ENCODE measurements at regions of chr2 and their contacts with region 1.

Region 1: GRCh38 chr2:43484323-43484930 is 111.4 kb downstream of the THADA start:
- DNase-seq: no peak
- ATAC-seq: peak; percentile 65 to 80 (median 70)
- H3K4me3 ChIP-seq: no peak overlapping the region
- H3K27ac ChIP-seq: peak overlapping the region; percentile 47
- H3K4me1 ChIP-seq: peaks cover 32% of the 10 kb centered on the region
- H3K27me3 ChIP-seq: no peaks in the 10 kb centered on the region
- CTCF ChIP-seq: peak; percentile 73

Region 2: DNA sequence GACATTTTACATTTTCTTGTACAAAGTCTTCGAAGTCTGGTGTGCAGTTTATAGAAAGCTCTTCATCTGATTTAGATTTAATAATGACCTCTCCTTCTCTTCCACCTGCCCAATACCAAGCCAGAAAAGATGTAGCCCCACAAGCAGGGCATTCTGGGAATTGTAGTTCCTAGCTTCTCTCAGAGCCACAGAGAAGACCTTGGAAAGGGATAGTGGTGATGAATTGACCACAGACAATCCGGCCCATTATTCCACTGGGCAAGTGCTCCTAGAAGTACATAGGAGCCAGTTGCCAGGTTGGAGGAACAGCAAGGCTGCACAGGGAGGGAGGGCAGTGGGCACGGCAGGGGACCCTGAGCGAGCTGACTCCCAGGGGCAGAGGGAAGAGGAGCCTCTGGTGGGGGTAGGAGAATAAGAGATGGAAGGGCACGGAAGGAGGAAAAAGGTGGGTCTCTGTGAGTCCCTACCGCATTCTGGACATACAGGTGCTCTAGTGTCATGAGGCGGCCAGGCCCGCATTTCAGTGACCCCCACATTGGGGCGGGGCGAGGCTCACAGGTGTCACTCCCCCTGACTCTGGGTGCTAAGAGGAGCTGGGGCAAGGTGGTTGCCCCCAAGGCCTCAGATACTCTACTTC is 539.5 kb before region 1 on chr2:
- intact Hi-C with region 1: loop called (anchors 5 kb)
- DNase-seq: no peak
- ATAC-seq: no peak
- H3K4me3 ChIP-seq: no peak overlapping the region
- H3K27ac ChIP-seq: no peak overlapping the region
- H3K4me1 ChIP-seq: peaks cover 7% of the 10 kb centered on the region
- H3K27me3 ChIP-seq: no peaks in the 10 kb centered on the region
- CTCF ChIP-seq: no peak

Region 3: GRCh38 chr2:42974721-42975717 is 509.4 kb before region 1 on chr2:
- intact Hi-C with region 1: loop called (anchors 5 to 10 kb)
- DNase-seq: peak; percentile 83 to 90
- ATAC-seq: peak; percentile 90 to 96 (median 92)
- H3K4me3 ChIP-seq: peak overlapping the region; percentile 57
- H3K27ac ChIP-seq: no peak overlapping the region
- H3K4me1 ChIP-seq: peaks cover 4% of the 10 kb centered on the region
- H3K27me3 ChIP-seq: no peaks in the 10 kb centered on the region
- CTCF ChIP-seq: peak; percentile 89

Region 4: GRCh38 chr2:43131024-43131889 is 353.2 kb before region 1 on chr2:
- intact Hi-C with region 1: loop called (anchors 5 to 10 kb)
- DNase-seq: peak; percentile 77 to 84
- ATAC-seq: peak; percentile 77 to 84 (median 82)
- H3K4me3 ChIP-seq: no peak overlapping the region
- H3K27ac ChIP-seq: peak overlapping the region; percentile 72
- H3K4me1 ChIP-seq: peaks cover 28% of the 10 kb centered on the region
- H3K27me3 ChIP-seq: no peaks in the 10 kb centered on the region
- CTCF ChIP-seq: peak; percentile 38

Region 5: DNA sequence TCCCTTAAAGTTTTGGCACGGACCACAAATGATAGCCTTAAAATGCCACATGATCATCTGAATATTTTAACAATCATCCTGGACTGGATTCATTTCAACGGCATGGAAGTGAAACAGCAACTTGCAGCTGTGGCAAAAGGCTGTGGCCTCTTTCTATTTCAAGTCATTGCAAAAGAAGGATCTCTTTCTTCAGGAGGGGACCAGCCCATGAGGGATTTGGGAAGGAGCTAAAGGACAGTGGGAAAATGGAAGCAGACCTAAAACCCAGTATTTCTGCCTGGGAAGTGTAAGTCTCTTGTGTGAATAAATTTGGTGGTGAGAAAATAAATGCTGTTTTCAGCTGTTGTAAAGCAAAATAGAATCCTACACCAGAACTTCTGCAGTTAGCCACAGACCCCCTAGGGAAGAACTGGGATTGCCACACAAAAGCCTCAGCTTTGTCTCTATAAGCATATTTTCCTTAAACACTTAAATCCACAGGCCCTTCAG is 150.7 kb before region 1 on chr2:
- intact Hi-C with region 1: loop called in 1 of 2 experiments (anchors 2 kb)
- DNase-seq: no peak
- ATAC-seq: peak; percentile 72 to 83 (median 78)
- H3K4me3 ChIP-seq: peak overlapping the region; percentile 42
- H3K27ac ChIP-seq: peak overlapping the region; percentile 97
- H3K4me1 ChIP-seq: peaks cover 73% of the 10 kb centered on the region
- H3K27me3 ChIP-seq: no peaks in the 10 kb centered on the region
- CTCF ChIP-seq: no peak